AG04450 (cell line): ENCODE measurements at regions of chr6 and their contacts with region 1.

Region 1: GRCh38 chr6:105374010-105374420 is 28.9 kb downstream of the PREP start:
- DNase-seq: no peak
- H3K4me3 ChIP-seq: no peak overlapping the region
- H3K27ac ChIP-seq: no peak overlapping the region
- H3K27me3 ChIP-seq: no peaks in the 10 kb centered on the region
- CTCF ChIP-seq: no peak

Region 2: GRCh38 chr6:105272786-105273185 is 101.2 kb before region 1 on chr6:
- CTCF ChIA-PET with region 1: no interaction called
- POLR2A ChIA-PET with region 1: no interaction called
- DNase-seq: no peak
- H3K4me3 ChIP-seq: no peak overlapping the region
- H3K27ac ChIP-seq: peak overlapping the region; percentile 3
- H3K27me3 ChIP-seq: no peaks in the 10 kb centered on the region
- CTCF ChIP-seq: no peak

Region 3: DNA sequence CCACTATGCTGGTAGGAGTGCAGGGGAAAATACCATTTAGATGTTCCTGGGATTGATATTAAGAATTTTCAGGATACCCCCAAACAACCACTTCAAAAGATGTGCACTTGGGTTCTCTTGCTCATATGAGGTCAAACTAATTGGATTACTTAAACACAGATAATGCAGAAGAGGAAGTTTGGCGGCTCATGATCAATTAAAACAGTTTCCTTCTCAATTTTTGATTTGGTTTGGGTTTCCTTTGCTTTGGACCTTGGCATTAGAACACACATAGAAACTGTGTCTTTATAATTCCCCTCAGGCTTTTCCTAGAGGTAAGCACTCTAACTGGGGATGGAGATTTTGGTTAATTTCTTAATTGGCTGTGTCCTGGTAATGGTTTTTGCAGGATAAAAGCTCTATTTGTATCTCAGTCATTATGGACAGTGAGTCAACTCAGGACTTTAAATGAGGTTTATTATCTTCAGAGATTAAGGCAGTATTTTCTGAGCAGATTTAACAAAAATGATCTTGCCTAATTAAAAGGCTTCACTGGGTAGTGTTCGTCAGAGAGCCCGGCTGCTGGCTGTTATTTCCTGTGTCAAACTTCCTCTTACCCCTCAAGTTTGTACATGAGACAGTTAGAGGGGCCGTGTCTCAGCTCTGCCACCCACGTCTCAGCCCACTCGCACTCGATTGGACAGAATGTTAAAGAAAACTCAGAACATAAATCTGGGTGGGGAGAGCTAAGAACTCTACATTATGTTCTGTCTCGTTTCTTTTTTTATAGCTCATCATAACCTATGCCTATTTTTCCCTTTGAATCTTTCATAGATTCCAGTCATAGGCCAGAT is 79.1 kb after region 1 on chr6:
- CTCF ChIA-PET with region 1: interaction called, 11 read pairs
- POLR2A ChIA-PET with region 1: no interaction called
- DNase-seq: no peak
- H3K4me3 ChIP-seq: no peak overlapping the region
- H3K27ac ChIP-seq: no peak overlapping the region
- H3K27me3 ChIP-seq: no peaks in the 10 kb centered on the region
- CTCF ChIP-seq: no peak